Head of caudate nucleus (tissue), 42 donors: ENCODE measurements at regions of chr9 and their contacts with region 1.

Region 1: GRCh38 chr9:37119907-37120842 is at the start of gene ZCCHC7:
- DNase-seq: peak; percentile 94 to 99 (median 97)

Region 2: DNA sequence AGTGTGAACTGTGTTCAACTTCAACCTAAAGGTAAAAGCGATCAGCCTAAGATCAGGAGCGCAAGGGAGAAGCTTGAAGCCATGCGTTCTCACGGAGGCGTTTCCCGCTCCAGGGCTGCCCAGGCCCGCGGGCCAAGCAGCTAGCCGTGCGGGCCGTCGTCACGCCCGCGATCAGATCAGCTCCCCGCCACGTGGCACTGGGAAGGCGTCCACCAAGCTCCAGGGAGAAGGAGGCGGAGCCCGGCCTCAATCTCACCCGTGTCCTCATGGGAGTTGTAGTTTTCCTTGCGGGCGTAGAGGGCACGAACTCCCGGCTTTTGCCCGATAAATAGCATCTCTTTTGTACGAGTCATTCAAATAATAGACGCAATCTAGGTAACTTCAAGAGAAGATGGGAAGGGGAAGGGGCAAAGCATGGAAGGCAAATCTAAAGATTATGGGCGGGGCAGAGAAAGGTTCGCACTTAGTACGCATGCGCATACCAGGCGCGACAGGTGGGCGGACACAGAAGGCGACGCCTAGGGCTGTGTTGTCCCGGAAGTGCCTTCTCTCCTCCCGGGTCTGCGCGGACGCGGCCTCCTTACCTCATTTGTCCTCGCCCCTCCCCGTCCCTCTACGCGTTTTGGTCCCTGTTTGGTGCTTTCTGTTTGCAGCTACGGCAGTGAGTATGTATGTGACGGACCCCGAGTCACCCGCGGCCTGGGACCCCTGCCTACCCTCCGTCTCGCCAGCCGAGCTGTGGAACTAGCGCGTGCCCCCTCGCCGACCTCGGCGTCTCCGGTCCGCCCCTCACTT is 40.6 kb before region 1 on chr9:
- intact Hi-C with region 1: loop called (anchors 1 kb)
- DNase-seq: peak; percentile 88 to 97 (median 93)

Region 3: GRCh38 chr9:37197158-37198038 is 77.2 kb after region 1 on chr9:
- intact Hi-C with region 1: no loop called
- DNase-seq: no peak